Heart right ventricle (tissue), 16 donors: ENCODE measurements at regions of chr2 and their contacts with region 1.

Region 1: GRCh38 chr2:134104754-134105153 is 149.1 kb upstream of the MGAT5 start:
- DNase-seq: no peak
- ATAC-seq: no peak
- H3K4me3 ChIP-seq: no peak overlapping the region
- H3K27ac ChIP-seq: no peak overlapping the region
- H3K4me1 ChIP-seq: peaks cover 0 to 5% (median 0%) of the 10 kb centered on the region in 9 donors
- H3K27me3 ChIP-seq: no peaks in the 10 kb centered on the region
- CTCF ChIP-seq: no peak

Region 2: GRCh38 chr2:133892352-133892913 is 212.3 kb before region 1 on chr2:
- intact Hi-C with region 1: loop called in 1 of 10 experiments (anchors 10 kb)
- DNase-seq: no peak
- ATAC-seq: peak in 1 of 8 donors; percentile 58
- H3K4me3 ChIP-seq: no peak overlapping the region
- H3K27ac ChIP-seq: no peak overlapping the region
- H3K4me1 ChIP-seq: peaks cover 0 to 3% (median 0%) of the 10 kb centered on the region in 9 donors
- H3K27me3 ChIP-seq: no peaks in the 10 kb centered on the region
- CTCF ChIP-seq: no peak

Region 3: GRCh38 chr2:133986081-133986837 is 118.5 kb before region 1 on chr2:
- intact Hi-C with region 1: no loop called
- DNase-seq: peak in 1 of 2 donors; percentile 32
- ATAC-seq: peak; percentile 76 to 96 (median 88)
- H3K4me3 ChIP-seq: peak overlapping the region in 3 of 10 donors; percentile 17 to 33 (median 30)
- H3K27ac ChIP-seq: peak overlapping the region; percentile 51 to 86 (median 72)
- H3K4me1 ChIP-seq: peaks cover 0 to 29% (median 10%) of the 10 kb centered on the region in 9 donors
- H3K27me3 ChIP-seq: no peaks in the 10 kb centered on the region
- CTCF ChIP-seq: no peak

Region 4: GRCh38 chr2:134021830-134022524 is 82.8 kb before region 1 on chr2:
- intact Hi-C with region 1: loop called in 1 of 10 experiments (anchors 10 kb)
- DNase-seq: no peak
- ATAC-seq: no peak
- H3K4me3 ChIP-seq: no peak overlapping the region
- H3K27ac ChIP-seq: no peak overlapping the region
- H3K4me1 ChIP-seq: peaks cover 0 to 6% (median 0%) of the 10 kb centered on the region in 9 donors
- H3K27me3 ChIP-seq: peaks cover 0 to 9% (median under 1%) of the 10 kb centered on the region in 7 donors
- CTCF ChIP-seq: no peak